Endothelial cell of umbilical vein (primary cell): ENCODE measurements at regions of chr11 and their contacts with region 1.

Region 1: DNA sequence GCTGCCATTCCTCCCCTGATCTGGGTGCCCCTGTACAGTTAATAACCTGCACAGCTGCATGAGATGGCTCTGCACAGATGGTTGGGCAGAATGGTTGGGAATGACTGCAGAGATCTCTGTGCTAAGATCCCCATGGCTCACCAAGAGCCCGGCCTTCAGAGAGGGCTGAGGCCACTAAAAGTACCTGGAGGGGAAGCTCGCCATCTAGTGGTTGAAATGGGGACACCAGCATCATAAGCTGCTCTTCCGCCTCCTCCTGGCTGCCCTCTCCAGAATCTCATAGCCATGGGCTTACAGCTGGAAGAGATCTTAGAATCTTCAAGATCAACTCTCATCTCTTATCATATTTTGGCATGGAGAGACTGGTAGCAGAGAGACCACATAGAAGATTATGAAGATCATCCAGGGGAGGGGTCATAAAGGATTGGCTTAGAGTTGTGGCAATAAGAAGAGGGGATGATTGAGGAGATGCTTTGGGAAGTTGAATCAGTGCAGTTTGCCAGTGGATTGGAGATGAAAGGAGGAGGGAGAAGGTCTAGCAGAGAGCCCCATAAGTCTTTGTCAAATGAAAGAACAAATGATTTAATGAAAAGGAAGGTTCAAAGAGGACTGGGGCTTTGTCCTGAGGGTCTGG is 22.0 kb upstream of the TLCD5 start:
- DNase-seq: peak; percentile 73
- H3K4me3 ChIP-seq: no peak overlapping the region
- H3K27ac ChIP-seq: no peak overlapping the region
- H3K4me1 ChIP-seq: peaks cover 6% of the 10 kb centered on the region
- H3K27me3 ChIP-seq: peaks cover 0 to 6% of the 10 kb centered on the region in 2 experiments
- CTCF ChIP-seq: peak; percentile 96 to 99
- POLR2A ChIP-seq: no peak

Region 2: DNA sequence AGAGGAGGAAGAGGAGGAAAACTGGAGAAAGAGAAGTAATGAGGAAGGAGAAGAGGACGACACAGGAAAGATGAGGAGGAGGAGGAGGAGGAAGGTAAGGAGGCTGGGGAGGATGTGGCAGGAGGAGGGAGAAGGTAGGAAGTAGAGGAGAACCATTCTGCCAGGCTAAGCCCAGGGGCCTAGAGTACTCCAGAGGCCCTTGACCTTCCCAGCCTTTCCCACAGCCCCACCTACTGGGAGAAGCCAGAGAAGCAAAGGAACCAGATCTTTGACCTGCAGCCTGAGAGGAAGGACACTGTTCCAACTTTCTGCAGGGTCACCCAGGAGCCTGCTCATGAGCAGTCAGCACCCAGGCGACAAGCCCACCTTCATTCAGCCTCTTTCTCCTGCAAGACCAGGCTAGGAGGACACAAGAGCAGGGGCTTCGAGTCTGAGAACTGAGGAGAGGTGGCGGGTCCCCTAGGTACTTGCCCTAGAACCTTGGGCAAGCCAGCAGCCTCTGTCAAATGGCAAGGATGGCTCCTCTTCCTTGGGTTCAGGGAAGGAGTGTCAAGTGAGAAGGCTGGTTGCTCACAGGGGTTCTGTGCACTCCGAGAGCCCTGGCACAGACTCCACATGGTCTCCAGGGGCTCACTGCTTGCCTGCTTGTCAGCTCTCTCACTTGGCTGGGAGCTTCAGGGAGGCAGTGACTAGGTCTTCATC is 120.2 kb before region 1 on chr11:
- CTCF ChIA-PET with region 1: interaction called, 52 read pairs
- POLR2A ChIA-PET with region 1: no interaction called
- dilution Hi-C with region 1: no loop called
- intact Hi-C with region 1: no loop called
- DNase-seq: no peak
- H3K4me3 ChIP-seq: no peak overlapping the region
- H3K27ac ChIP-seq: no peak overlapping the region
- H3K4me1 ChIP-seq: no peaks in the 10 kb centered on the region
- H3K27me3 ChIP-seq: no peaks in the 10 kb centered on the region
- CTCF ChIP-seq: peak; percentile 22 to 34
- POLR2A ChIP-seq: no peak

Region 3: GRCh38 chr11:120235024-120235861 is 67.9 kb before region 1 on chr11:
- CTCF ChIA-PET with region 1: interaction called, 327 read pairs
- POLR2A ChIA-PET with region 1: interaction called, 3 read pairs
- dilution Hi-C with region 1: no loop called
- intact Hi-C with region 1: loop called (anchors 1 kb)
- DNase-seq: peak; percentile 56
- H3K4me3 ChIP-seq: no peak overlapping the region
- H3K27ac ChIP-seq: no peak overlapping the region
- H3K4me1 ChIP-seq: no peaks in the 10 kb centered on the region
- H3K27me3 ChIP-seq: peaks cover 19% of the 10 kb centered on the region in 2 experiments
- CTCF ChIP-seq: peak; percentile 77 to 79
- POLR2A ChIP-seq: no peak

Region 4: GRCh38 chr11:120258661-120259060 is 44.5 kb before region 1 on chr11:
- CTCF ChIA-PET with region 1: interaction called, 20 read pairs
- POLR2A ChIA-PET with region 1: no interaction called
- dilution Hi-C with region 1: no loop called
- intact Hi-C with region 1: no loop called
- DNase-seq: no peak
- H3K4me3 ChIP-seq: no peak overlapping the region
- H3K27ac ChIP-seq: no peak overlapping the region
- H3K4me1 ChIP-seq: no peaks in the 10 kb centered on the region
- H3K27me3 ChIP-seq: peaks cover 16 to 22% of the 10 kb centered on the region in 2 experiments
- CTCF ChIP-seq: no peak
- POLR2A ChIP-seq: no peak

Region 5: GRCh38 chr11:120316842-120317688 is 13.9 kb after region 1 on chr11:
- CTCF ChIA-PET with region 1: interaction called, 35 read pairs
- POLR2A ChIA-PET with region 1: no interaction called
- dilution Hi-C with region 1: no loop called
- intact Hi-C with region 1: no loop called
- DNase-seq: no peak
- H3K4me3 ChIP-seq: no peak overlapping the region
- H3K27ac ChIP-seq: no peak overlapping the region
- H3K4me1 ChIP-seq: no peaks in the 10 kb centered on the region
- H3K27me3 ChIP-seq: peaks cover 21 to 24% of the 10 kb centered on the region in 2 experiments
- CTCF ChIP-seq: no peak
- POLR2A ChIP-seq: no peak

Region 6: DNA sequence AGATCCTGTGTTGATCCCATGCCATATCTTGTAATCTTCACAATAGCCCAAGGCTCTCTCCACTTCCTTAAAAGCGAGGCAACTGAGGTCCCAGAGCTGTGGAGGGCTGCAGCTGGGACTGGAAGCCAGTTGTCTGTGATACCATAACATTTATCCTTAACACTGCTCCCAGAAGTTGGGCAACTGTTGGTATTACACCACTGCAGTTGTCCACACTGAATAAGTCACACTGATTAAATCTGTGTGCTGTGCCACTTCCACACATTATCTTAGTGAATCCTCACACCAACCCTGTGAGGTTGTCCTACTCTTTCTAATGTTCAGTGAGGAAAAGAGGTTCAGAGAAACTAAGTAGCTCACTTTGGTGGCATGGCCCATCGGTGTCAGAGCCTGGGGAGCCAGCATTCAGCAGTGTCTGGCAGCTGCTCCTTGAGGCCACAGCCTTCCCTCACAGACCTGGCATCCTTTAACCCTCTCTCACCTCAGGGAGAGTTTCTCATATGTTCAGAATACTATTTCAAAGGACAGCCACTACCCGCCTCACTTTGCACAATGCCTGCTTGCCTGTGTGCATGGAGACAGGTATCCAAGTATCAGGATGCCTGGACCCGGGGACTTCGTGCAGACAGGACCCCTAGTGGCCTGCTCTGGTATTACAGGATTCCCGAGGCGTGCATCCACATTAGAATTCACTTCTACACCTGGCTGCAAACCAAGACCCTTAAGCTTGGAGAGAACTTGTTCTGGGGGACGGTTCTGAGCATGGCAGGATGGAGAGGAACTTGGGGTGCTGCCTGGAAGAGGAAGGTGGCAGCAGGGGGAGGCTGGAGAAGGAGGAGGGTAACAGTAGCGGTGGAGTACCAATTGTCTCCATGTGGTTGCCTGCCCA is 498.9 kb after region 1 on chr11:
- CTCF ChIA-PET with region 1: no interaction called
- POLR2A ChIA-PET with region 1: no interaction called
- dilution Hi-C with region 1: no loop called
- intact Hi-C with region 1: no loop called
- DNase-seq: peak; percentile 58
- H3K4me3 ChIP-seq: no peak overlapping the region
- H3K27ac ChIP-seq: no peak overlapping the region
- H3K4me1 ChIP-seq: peaks cover 2% of the 10 kb centered on the region
- H3K27me3 ChIP-seq: no peaks in the 10 kb centered on the region
- CTCF ChIP-seq: peak; percentile 89 to 91
- POLR2A ChIP-seq: no peak